ENCODE measurements at regions of chr17 and their contacts with region 1.

Region 1: GRCh38 chr17:39205112-39205526 is 5.0 kb downstream of the RPL19 start:
- DNase-seq: no peak
- H3K4me3 ChIP-seq: no peak overlapping the region
- H3K27ac ChIP-seq: no peak overlapping the region
- H3K4me1 ChIP-seq: peaks cover 0 to 43% (median 37%) of the 10 kb centered on the region in 4 experiments
- H3K27me3 ChIP-seq: no peaks in the 10 kb centered on the region

Region 2: DNA sequence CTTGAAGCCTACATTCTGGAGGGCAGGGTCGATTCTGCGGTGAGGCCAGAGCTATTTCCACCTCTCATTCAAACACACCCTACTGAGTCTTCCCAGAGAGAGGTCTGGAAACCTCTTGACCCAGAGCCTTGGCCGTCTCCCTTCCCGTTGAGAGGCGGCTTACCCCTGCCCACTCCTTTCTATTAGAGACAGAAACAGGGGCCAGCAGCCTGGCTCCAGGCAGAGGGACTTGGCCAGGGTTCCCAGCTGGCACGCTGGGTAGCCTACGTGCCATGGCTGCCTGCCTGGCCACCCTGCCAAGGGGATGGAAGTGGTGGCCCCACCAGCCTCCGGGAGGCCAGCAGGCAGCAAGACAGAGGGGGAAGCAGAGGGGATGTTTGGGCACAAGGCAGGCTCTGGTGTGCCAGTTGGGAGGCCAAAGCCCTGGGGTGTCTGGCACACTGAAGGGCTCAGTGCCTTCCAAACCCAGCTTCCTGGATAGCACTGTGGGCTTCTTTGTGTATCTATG is 14.6 kb after region 1 on chr17:
- CTCF ChIA-PET with region 1: interaction called, 14 read pairs
- POLR2A ChIA-PET with region 1: interaction called, 3 read pairs
- DNase-seq: no peak
- H3K4me3 ChIP-seq: no peak overlapping the region
- H3K27ac ChIP-seq: no peak overlapping the region
- H3K4me1 ChIP-seq: peaks cover 0 to 7% (median 4%) of the 10 kb centered on the region in 4 experiments
- H3K27me3 ChIP-seq: peaks cover 0 to 57% (median 29%) of the 10 kb centered on the region in 5 experiments

Measured in common myeloid progenitor, CD34-positive (primary cell).